ENCODE measurements at regions of chr3 and their contacts with region 1.

Region 1: DNA sequence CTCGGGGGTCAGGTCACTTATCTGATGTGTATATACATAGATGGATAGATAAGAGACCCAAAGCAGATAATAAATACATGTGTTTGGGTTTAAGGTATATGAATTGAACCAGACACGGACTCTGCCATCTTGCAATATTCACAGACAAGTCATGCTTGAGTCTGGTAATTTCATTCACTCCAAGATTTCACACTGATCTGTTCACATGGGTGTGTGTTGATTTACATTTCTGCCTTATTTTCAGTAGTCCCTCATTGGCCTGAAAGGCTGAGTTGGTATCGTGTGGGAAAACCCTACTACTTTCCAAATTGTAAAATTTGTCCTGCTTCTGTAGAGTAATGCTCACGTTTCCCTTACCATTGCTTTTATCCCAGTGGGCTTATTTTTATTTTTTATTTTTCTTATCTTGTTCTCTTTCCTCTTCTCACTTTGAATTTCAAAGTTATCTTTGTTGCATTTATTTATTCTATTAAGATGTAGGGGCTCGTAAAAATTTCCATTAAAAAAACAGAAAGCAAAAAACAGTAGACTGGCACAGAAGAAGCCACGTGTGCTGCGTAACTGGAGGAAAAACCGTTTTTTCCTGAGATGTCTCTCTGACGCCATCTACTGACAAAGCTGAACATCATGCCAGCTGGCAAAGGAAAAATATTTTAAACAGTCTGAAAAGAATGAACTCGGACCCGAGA is 10.8 kb upstream of the MFSD1 start:
- DNase-seq: peak; percentile 54 to 76
- ATAC-seq: peak; percentile 35 to 61; a peak in 3 of 6 replicates
- H3K4me3 ChIP-seq: no peak overlapping the region
- H3K27ac ChIP-seq: peak overlapping the region; percentile 79
- H3K4me1 ChIP-seq: peaks cover 55% of the 10 kb centered on the region
- CTCF ChIP-seq: peak; percentile 91
- EP300 ChIP-seq: no peak
- POLR2A ChIP-seq: no peak
- RAD21 ChIP-seq: peak; percentile 88 to 94

Region 2: DNA sequence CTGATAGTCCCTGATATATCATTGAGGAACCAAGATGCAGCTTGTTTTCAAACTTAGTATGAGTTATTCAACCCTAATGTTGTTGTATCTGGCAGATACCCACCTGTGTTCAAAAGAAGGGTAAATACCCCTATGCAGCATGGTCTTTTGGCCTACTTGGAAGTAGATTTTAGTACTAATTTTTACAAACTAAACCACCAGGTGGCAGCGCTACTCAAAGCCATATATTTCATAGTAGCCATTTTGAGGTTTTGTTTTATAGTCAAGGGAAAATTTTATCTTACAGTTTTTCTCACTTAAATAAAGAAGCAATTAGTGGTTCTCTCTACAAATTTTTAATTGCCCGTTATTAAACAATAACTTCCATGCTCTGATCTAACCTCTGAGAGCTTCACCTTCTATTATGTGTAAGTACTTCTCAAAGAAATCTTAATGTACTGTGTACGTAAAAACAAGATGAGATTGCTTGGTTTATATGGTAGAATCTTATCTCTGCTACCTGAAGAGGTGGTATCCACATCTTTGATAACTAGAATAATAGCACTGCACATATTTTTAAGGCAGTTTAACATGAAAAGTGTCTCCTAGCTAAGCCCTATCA is 251.5 kb before region 1 on chr3:
- CTCF ChIA-PET with region 1: interaction called, 15 read pairs
- POLR2A ChIA-PET with region 1: no interaction called
- DNase-seq: peak; percentile 6 to 63
- ATAC-seq: peak; percentile 47 to 81; a peak in 4 of 6 replicates
- H3K4me3 ChIP-seq: no peak overlapping the region
- H3K27ac ChIP-seq: no peak overlapping the region
- H3K4me1 ChIP-seq: no peaks in the 10 kb centered on the region
- CTCF ChIP-seq: peak; percentile 75
- EP300 ChIP-seq: no peak
- POLR2A ChIP-seq: no peak
- RAD21 ChIP-seq: peak; percentile 54 to 57

Region 3: GRCh38 chr3:158659454-158660237 is 131.4 kb before region 1 on chr3:
- CTCF ChIA-PET with region 1: interaction called, 114 read pairs
- POLR2A ChIA-PET with region 1: no interaction called
- DNase-seq: peak; percentile 60 to 73
- ATAC-seq: peak; percentile 87 to 89
- H3K4me3 ChIP-seq: no peak overlapping the region
- H3K27ac ChIP-seq: peak overlapping the region in 1 of 2 experiments; percentile 31; a peak in 1 of 6 replicates
- H3K4me1 ChIP-seq: peaks cover 28% of the 10 kb centered on the region
- CTCF ChIP-seq: peak; percentile 68
- EP300 ChIP-seq: no peak
- POLR2A ChIP-seq: no peak
- RAD21 ChIP-seq: peak; percentile 56

Region 4: GRCh38 chr3:158700559-158700958 is 90.5 kb before region 1 on chr3:
- CTCF ChIA-PET with region 1: interaction called, 13 read pairs
- POLR2A ChIA-PET with region 1: no interaction called
- DNase-seq: no peak
- ATAC-seq: no peak
- H3K4me3 ChIP-seq: no peak overlapping the region
- H3K27ac ChIP-seq: no peak overlapping the region
- H3K4me1 ChIP-seq: peaks cover 52% of the 10 kb centered on the region
- CTCF ChIP-seq: no peak
- EP300 ChIP-seq: no peak
- POLR2A ChIP-seq: no peak
- RAD21 ChIP-seq: no peak

Region 5: DNA sequence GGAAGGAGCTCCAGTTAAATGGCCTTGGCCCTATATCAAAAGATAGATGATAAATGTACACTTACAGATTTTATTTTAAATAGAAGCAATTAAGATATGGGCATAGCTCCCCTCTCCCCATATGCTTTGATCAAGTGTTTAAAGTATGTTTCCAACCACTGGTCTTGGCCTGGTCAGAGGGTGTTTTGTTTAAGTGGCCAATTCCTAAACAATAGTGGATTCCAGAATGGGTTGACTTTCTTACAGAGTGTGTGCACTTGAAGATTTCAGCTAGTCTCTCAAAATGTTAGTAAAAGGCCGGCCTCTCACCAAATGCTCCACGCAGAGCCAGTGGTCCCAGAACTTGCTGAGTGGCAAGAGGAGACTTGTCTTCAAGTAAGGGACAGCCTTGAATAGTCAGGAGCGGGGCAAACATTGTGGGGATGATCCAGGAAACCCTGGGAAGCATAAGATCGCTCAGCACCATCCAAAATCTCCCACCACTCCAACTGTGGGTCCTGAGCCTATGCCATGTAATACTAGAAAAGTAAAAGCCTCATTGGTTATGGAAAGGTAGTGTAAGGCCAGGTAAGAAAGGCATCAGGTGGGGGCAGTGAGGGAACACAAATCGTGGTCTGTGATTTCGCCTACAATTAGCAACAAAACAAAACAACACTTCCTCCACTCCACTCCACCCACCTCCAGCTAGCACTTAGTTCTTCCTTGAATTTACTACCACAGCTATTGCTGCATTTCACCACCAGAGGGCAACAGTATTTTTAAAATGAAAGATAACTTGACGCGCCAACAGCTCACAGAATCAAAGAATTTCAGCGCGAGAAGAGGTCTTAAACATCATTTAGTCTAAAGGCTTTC is 63.6 kb before region 1 on chr3:
- CTCF ChIA-PET with region 1: interaction called, 202 read pairs
- POLR2A ChIA-PET with region 1: interaction called, 7 read pairs
- DNase-seq: peak; percentile 79 to 80
- ATAC-seq: peak; percentile 11 to 17; a peak in 3 of 6 replicates
- H3K4me3 ChIP-seq: 0 out of 3 replicates have a peak overlapping the region, but pooled peaks have one; percentile 23
- H3K27ac ChIP-seq: peak overlapping the region; percentile 80 to 90; a peak in 5 of 6 replicates
- H3K4me1 ChIP-seq: peaks cover 69% of the 10 kb centered on the region
- CTCF ChIP-seq: peak; percentile 84
- EP300 ChIP-seq: no peak
- POLR2A ChIP-seq: no peak
- RAD21 ChIP-seq: peak; percentile 84

Region 6: GRCh38 chr3:158742871-158743663 is 48.0 kb before region 1 on chr3:
- CTCF ChIA-PET with region 1: interaction called, 13 read pairs
- POLR2A ChIA-PET with region 1: no interaction called
- DNase-seq: no peak
- ATAC-seq: no peak
- H3K4me3 ChIP-seq: no peak overlapping the region
- H3K27ac ChIP-seq: 0 out of 6 replicates have a peak overlapping the region, but pooled peaks of 1 of the 2 experiments have one; percentile 38
- H3K4me1 ChIP-seq: peaks cover 26% of the 10 kb centered on the region
- CTCF ChIP-seq: no peak
- EP300 ChIP-seq: no peak
- POLR2A ChIP-seq: no peak
- RAD21 ChIP-seq: no peak

Region 7: GRCh38 chr3:158768361-158768787 is 22.7 kb before region 1 on chr3:
- CTCF ChIA-PET with region 1: interaction called, 30 read pairs
- POLR2A ChIA-PET with region 1: no interaction called
- DNase-seq: peak; percentile 35 to 62
- ATAC-seq: peak; percentile 79 to 86
- H3K4me3 ChIP-seq: no peak overlapping the region
- H3K27ac ChIP-seq: peak overlapping the region; percentile 75 to 89
- H3K4me1 ChIP-seq: peaks cover 72% of the 10 kb centered on the region
- CTCF ChIP-seq: no peak
- EP300 ChIP-seq: no peak
- POLR2A ChIP-seq: no peak
- RAD21 ChIP-seq: no peak

Region 8: DNA sequence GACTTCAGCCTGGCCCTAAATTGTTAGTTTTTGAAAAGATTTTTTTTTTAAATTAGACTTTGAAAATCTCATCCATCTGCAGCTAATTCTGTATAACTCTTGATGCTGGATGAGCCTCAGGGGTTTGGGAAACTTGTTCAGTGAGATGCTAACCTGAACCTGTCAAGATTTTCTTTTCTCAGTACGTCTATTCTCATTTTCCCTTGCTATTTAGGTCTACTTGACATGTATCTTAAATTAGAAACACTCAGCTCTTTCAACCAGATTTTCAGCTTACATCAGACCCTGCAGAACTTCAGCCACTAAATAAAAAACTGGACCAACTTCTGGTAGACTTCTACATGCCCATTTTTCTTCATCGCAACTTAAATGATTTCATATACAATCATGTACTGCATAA is 72.2 kb after region 1 on chr3:
- CTCF ChIA-PET with region 1: no interaction called
- POLR2A ChIA-PET with region 1: no interaction called
- DNase-seq: no peak
- ATAC-seq: no peak
- H3K4me3 ChIP-seq: no peak overlapping the region
- H3K27ac ChIP-seq: no peak overlapping the region
- H3K4me1 ChIP-seq: no peaks in the 10 kb centered on the region
- CTCF ChIP-seq: no peak
- EP300 ChIP-seq: no peak
- POLR2A ChIP-seq: no peak
- RAD21 ChIP-seq: no peak

Region 9: DNA sequence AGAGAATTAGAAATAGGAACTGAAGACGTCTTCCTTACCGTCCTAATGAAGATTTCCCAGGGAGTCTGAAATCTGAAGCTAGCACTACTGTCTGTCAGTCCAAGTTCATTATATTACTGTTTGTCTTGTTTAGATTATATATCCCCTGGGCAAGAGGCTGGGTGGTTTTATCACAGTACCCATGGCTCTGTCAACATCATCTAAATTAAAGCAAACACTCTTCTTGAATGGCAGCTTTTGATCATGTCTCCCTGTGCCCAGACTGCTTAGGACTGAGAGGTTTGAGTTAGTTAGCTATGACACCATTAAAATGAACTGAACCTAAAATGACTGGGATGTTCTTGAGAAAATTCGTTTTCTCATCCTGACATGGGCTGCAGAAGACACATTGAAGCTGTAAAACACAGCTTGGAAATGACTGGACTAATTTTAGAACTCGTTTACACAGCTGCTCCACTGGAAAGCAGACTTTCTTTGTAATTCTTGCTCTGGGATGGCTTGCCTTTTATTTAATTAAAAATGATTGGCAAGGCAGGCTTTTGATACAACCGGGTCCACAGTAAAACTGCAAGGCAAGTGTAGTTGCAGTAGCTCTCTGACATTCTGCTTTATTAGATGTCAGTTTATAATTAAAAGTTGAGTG is 254.3 kb after region 1 on chr3:
- CTCF ChIA-PET with region 1: no interaction called
- POLR2A ChIA-PET with region 1: no interaction called
- DNase-seq: no peak
- ATAC-seq: no peak
- H3K4me3 ChIP-seq: no peak overlapping the region
- H3K27ac ChIP-seq: no peak overlapping the region
- H3K4me1 ChIP-seq: no peaks in the 10 kb centered on the region
- CTCF ChIP-seq: no peak
- EP300 ChIP-seq: no peak
- POLR2A ChIP-seq: no peak
- RAD21 ChIP-seq: no peak

Measured in A549 (cell line).